Activated CD8-positive, alpha-beta memory T cell treated with anti-CD3 and anti-CD28 coated beads, Interleukin-2, amount 10 ng/mL, durations not matched to agents 7 days and 5 days (primary cell): ENCODE measurements at regions of chr1 and their contacts with region 1.

Region 1: DNA sequence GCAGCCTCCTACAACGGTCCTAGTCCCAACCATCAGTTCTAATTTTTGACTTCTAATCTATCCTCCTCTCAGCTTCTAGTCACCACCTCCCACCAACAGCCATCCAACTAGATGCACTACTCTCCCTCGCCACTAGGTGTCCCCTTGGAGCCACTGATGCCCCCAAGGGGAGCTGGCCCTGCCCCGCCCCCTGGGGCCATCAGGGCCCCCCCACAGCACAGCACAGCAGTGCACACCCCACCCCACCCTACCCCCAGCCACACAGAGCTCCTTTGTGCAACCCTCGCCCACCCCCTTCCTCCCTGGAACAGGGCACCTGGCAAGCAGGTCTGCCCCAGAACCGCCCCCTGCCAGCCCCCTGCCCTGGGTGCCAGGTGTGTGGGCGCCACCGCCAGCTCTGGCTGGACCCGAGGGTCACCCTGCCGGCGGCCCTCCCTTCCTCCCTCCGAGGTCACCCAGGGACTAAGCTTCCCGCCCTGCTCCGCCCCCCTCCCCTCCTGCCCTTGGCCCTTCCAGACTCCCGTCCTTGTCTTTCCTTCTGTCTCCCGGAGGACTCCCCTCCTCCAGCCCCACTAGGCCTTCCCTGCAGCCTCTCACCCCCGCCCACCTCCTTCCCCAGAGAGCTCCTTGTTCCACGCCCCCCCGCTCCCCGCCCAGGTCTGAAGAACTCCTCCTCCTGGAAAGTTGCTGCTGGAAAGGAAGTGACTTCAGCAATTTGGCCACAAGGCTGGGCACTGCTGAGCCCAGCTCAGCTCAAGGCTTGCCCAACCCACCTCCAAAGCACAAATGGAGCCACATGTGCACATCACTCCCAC is 47.0 kb downstream of the AHDC1 start:
- DNase-seq: peak; percentile 87
- ATAC-seq: peak; percentile 82
- H3K4me3 Mint-ChIP-seq: no peak overlapping the region
- H3K27ac Mint-ChIP-seq: peak overlapping the region; percentile 84
- H3K4me1 Mint-ChIP-seq: peaks cover 27% of the 10 kb centered on the region
- H3K27me3 Mint-ChIP-seq: no peaks in the 10 kb centered on the region

Region 2: DNA sequence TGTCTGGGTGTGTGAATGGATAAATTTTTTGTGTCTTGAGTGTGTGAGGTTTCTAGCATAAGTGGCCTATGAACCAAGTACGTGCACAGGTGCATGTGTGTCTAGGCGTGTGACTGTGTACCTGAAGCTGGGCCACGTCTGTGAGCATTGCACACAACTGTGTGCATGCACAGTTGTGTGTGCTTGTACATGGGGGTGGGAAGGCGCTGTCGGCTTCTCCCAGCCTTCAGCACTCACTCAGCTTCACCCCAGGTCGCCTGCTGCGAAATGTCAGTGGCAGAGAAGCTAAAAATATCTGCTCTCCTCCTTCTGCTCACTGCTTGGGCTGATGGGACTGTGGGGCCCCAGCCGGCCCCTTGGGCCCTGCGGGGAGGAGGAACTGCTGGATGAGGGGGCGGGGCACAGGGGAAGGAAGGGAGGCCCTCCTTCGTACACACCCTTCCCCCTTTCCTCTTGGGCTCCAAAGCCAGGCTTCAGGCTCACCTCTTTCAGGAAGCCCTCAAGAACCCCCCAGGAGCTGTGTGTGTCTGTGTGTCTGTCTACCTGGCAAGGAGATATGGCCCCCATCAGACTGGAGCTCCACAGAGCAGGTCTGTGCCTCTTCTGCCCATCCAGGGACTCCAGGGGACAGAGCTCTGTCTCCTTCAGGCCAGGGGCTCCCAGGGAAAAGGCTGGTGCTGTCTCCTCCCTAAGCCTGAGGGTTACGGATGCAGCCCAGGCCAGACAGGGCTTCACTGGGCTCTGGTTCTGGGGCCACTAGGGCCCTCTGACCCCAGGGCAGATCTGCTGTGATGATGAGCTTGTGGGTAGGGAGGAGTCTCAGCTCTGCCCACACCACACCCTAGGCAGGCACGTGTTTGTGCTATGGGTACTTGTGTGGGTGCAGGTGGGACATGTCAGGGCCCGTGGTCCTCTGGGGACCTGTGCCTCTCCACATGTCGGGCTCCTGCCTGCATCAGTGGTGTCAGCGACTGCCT is 31.4 kb before region 1 on chr1:
- CTCF ChIA-PET with region 1: interaction called, 35 read pairs
- DNase-seq: peak; percentile 79
- ATAC-seq: peak; percentile 63
- H3K4me3 Mint-ChIP-seq: peak overlapping the region; percentile 25
- H3K27ac Mint-ChIP-seq: peak overlapping the region; percentile 43
- H3K4me1 Mint-ChIP-seq: peaks cover 59% of the 10 kb centered on the region
- H3K27me3 Mint-ChIP-seq: peaks cover 7% of the 10 kb centered on the region

Region 3: GRCh38 chr1:27568300-27569087 is 11.5 kb after region 1 on chr1:
- CTCF ChIA-PET with region 1: interaction called, 126 read pairs
- DNase-seq: peak; percentile 94
- ATAC-seq: peak; percentile 98
- H3K4me3 Mint-ChIP-seq: peak overlapping the region; percentile 59
- H3K27ac Mint-ChIP-seq: peak overlapping the region; percentile 45
- H3K4me1 Mint-ChIP-seq: peaks cover 15% of the 10 kb centered on the region
- H3K27me3 Mint-ChIP-seq: no peaks in the 10 kb centered on the region

Region 4: GRCh38 chr1:27581823-27582243 is 24.8 kb after region 1 on chr1:
- CTCF ChIA-PET with region 1: interaction called, 11 read pairs
- DNase-seq: no peak
- ATAC-seq: no peak
- H3K4me3 Mint-ChIP-seq: no peak overlapping the region
- H3K27ac Mint-ChIP-seq: no peak overlapping the region
- H3K4me1 Mint-ChIP-seq: peaks cover 9% of the 10 kb centered on the region
- H3K27me3 Mint-ChIP-seq: peaks cover 2% of the 10 kb centered on the region

Region 5: DNA sequence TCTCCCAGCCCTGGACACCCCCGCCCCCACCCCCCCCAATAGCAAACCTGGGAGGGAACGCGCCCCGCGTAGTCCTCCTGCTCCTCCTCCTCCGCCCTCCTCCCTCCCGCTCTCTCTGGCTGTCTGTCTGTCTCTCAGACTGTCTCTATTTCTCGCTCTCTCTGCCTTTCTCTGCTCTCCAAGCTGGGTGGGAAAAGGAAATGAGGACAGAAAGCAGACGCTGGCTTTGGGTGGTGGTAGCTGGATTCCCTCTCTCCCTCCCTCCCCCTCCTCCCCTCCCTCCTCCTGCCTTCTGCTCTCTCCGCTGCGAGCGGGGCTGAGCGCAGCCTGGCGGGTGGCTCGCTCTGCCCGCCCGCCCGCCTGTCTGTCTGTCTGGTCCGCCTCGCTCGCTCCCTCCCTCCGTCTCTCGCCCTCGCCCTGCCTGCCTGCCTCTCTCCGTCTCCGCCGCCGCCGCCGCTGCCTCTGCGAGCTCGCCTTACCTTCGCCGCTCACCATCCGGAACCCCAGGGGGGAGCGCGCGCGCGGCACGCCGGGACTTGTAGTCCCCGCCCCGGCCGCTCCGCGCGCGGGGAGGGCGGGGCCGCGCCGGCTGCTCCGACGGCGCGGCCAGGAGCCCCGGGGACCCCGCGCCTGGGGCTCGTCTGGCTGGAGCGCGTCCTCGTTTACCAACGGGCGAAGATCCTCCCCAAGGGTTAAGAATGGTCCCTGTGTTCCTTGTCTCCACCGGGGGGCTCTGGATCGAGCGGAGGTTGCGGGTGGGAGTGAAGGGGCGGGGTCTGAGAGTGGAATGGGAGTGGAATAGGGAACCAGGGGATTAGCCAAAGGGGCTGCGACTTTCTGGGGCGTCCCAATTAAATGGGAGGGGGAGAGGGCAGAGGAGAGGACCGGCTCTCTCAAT is 46.9 kb after region 1 on chr1 and contains the start of gene AHDC1:
- CTCF ChIA-PET with region 1: interaction called, 100 read pairs
- DNase-seq: peak; percentile 93
- ATAC-seq: peak; percentile 90
- H3K4me3 Mint-ChIP-seq: peak within 1 kb of the TSS; percentile 94
- H3K27ac Mint-ChIP-seq: peak within 1 kb of the TSS; percentile 70
- H3K4me1 Mint-ChIP-seq: peaks cover 37% of the 10 kb centered on the region
- H3K27me3 Mint-ChIP-seq: no peaks in the 10 kb centered on the region
- total RNA-seq, gene AHDC1: 15.8 to 18.5 TPM